A549 (cell line): ENCODE measurements at regions of chr1 and their contacts with region 1.

Region 1: DNA sequence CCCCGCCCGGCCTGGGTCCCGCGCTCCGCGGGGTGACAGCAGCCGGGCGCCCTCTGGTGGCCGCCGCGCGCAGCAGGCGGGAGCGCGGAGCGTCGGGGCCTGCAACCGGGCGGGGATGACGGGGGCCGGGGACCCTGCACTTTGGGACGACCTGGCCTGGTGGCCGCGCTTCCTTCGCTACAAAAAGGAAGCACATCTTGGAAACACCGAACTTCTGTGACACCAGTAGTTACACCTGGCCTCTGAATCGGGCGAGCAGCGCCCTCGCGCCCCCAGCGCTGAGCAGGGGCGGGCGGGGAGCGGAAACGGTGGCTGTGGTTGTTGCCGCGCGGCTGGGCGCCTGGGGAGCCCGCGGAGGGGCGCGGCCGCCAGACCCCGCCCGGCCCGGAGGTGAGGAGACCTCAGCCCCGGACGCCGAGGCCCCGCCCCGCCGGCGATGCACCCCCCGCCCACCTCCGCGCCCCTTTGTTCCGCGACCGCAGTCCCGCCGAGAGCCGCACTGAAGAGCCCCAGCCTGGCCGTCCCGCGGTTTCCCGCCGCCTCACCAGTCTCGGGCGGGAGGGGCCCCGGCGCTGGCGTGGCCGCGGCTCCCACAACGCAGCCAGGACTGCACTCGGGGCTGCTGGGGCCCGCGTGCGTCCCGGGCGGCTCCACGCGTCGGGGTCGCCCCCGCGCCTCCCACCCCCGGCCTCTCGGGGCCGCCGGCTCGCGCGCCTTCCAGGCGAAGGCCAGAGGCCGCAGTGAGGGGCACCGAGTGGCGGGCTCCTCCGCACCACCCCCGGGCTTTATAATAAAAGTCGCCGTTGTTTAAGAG is 59.3 kb downstream of the H3-3A start:
- DNase-seq: peak; percentile 67 to 88
- ATAC-seq: peak; percentile 72 to 77
- H3K4me3 ChIP-seq: peak overlapping the region; percentile 62
- H3K27ac ChIP-seq: peak overlapping the region; percentile 90 to 98
- H3K4me1 ChIP-seq: peaks cover 31% of the 10 kb centered on the region
- CTCF ChIP-seq: peak; percentile 99
- EP300 ChIP-seq: no peak
- POLR2A ChIP-seq: peak; percentile 45
- RAD21 ChIP-seq: peak; percentile 41 to 85; a peak in 4 of 5 replicates

Region 2: DNA sequence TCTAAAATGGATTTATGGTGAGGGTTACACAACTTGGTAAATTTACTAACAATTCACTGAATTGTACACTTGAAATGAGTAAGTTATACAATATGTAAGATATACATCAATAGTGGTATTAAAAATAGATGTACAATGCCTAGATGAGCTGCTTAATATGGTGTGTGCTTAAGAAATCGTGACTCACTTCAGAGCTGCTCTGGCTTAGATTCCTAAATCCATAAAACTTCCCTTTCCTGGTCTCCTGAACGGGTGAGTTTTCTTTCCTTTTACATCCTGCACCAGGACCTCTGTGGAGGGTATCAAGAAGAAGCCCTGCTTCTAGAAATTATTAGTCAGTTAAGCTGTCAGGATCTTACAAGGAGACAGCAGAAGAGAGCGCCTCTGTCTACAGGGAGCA is 28.8 kb before region 1 on chr1:
- CTCF ChIA-PET with region 1: interaction called, 32 read pairs
- POLR2A ChIA-PET with region 1: no interaction called
- DNase-seq: no peak
- ATAC-seq: no peak
- H3K4me3 ChIP-seq: no peak overlapping the region
- H3K27ac ChIP-seq: no peak overlapping the region
- H3K4me1 ChIP-seq: no peaks in the 10 kb centered on the region
- CTCF ChIP-seq: no peak
- EP300 ChIP-seq: no peak
- POLR2A ChIP-seq: no peak
- RAD21 ChIP-seq: no peak

Region 3: DNA sequence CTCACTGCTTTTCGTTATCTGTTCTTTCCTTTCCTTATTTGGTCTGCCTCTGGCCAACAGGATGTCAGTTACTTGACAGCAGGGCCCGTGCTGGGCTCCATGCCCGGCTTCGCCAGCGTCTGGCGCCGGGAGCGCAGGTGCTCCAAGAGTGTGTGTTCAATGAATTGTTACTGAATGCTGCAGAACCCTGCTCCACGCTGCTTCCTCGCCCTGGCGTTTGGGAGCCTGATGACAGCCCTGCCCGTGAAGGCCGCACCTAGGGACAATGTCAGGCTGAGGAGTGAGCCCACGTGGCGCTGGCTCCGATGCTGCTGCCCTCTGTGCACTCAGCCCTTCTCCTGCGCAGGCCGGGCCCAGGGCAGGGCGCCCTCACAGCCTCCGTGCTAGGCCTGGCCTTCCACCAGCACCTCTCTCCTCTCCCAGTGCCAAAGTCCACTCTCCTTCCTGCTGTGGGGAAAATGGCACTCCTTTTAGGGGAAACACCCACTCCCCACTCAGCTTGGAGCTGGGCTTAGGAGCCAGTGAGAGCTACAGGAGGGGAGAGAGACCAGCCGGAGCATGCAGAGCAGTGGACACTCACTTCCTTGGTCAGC is 13.4 kb after region 1 on chr1:
- CTCF ChIA-PET with region 1: interaction called, 35 read pairs
- POLR2A ChIA-PET with region 1: no interaction called
- DNase-seq: no peak
- ATAC-seq: peak; percentile 23 to 46; a peak in 4 of 6 replicates
- H3K4me3 ChIP-seq: no peak overlapping the region
- H3K27ac ChIP-seq: peak overlapping the region in 1 of 2 experiments; percentile 59; a peak in 3 of 6 replicates
- H3K4me1 ChIP-seq: 0 out of 3 replicates have a peak, but pooled peaks cover 5% of the 10 kb centered on the region
- CTCF ChIP-seq: no peak
- EP300 ChIP-seq: no peak
- POLR2A ChIP-seq: no peak
- RAD21 ChIP-seq: no peak

Region 4: GRCh38 chr1:226162898-226163297 is 41.1 kb after region 1 on chr1:
- CTCF ChIA-PET with region 1: interaction called, 39 read pairs
- POLR2A ChIA-PET with region 1: no interaction called
- DNase-seq: no peak
- ATAC-seq: no peak
- H3K4me3 ChIP-seq: no peak overlapping the region
- H3K27ac ChIP-seq: no peak overlapping the region
- H3K4me1 ChIP-seq: no peaks in the 10 kb centered on the region
- CTCF ChIP-seq: no peak
- EP300 ChIP-seq: no peak
- POLR2A ChIP-seq: no peak
- RAD21 ChIP-seq: no peak

Region 5: GRCh38 chr1:226209307-226210059 is 87.7 kb after region 1 on chr1:
- CTCF ChIA-PET with region 1: interaction called, 21 read pairs
- POLR2A ChIA-PET with region 1: no interaction called
- DNase-seq: no peak
- ATAC-seq: peak in 1 of 2 experiments; percentile 29; a peak in 3 of 6 replicates
- H3K4me3 ChIP-seq: no peak overlapping the region
- H3K27ac ChIP-seq: no peak overlapping the region
- H3K4me1 ChIP-seq: no peaks in the 10 kb centered on the region
- CTCF ChIP-seq: no peak
- EP300 ChIP-seq: no peak
- POLR2A ChIP-seq: no peak
- RAD21 ChIP-seq: no peak

Region 6: DNA sequence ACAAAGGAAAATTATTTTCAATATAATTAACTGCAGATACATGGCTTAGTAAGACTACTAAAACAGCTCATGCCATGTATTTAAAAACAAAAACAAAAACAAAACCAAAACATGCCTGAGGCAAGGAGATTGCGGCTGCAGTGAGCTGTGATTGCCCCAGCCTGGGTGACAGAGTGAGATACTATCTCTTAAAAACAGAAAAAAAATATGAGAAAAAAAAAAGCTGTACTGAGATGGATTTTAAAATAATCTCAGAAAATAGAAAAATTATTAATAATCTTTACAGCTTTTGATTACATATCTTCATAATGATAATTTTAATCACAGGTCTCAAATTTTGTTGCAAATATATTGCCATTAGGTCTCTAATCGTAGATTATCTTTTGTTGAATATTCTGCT is 211.2 kb after region 1 on chr1:
- CTCF ChIA-PET with region 1: interaction called, 57 read pairs
- POLR2A ChIA-PET with region 1: no interaction called
- DNase-seq: no peak
- ATAC-seq: peak in 1 of 2 experiments; percentile 47; a peak in 4 of 6 replicates
- H3K4me3 ChIP-seq: peak overlapping the region; percentile 35; the same call in 2 of the 3 replicates
- H3K27ac ChIP-seq: peak overlapping the region; percentile 48 to 59; a peak in 3 of 6 replicates
- H3K4me1 ChIP-seq: no peaks in the 10 kb centered on the region
- CTCF ChIP-seq: no peak
- EP300 ChIP-seq: no peak
- POLR2A ChIP-seq: no peak
- RAD21 ChIP-seq: no peak